Mammary epithelial cell (primary cell): ENCODE measurements at regions of chr13 and their contacts with region 1.

Region 1: DNA sequence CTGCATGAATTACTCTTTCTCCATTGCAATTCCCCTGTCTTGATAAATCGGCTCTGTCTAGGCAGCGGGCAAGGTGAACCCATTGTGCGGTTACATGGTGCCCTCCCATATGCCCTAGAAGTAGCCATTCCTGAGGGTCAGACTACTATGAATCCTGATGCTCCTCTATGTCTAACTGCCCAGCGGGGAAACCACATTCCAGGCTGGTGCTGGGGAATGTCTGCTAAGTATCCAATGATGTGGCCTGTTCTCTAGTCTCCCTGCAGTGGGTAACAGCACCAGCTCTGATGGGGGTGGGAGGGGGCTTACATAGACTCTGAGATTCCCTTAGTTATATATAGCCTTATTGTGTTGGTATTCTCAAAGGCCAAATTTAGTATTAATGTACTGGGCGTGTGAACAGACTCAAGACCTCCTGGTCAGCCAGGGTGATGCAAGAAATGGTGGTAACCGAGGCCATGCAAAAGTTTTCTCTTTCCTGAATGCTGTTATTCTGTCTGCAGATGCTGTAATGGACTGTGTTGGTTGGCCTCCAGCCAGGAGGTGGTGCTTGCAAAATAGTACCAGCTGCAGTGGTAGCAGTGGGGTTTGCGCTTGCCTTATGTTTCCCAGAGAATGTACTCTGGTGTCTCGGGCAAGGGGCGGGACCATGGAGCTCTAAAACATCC is 564.8 kb upstream of the SLITRK1 start:
- DNase-seq: no peak
- H3K4me3 ChIP-seq: no peak overlapping the region
- H3K27ac ChIP-seq: no peak overlapping the region
- H3K4me1 ChIP-seq: peaks cover 30% of the 10 kb centered on the region
- H3K27me3 ChIP-seq: no peaks in the 10 kb centered on the region
- CTCF ChIP-seq: no peak

Region 2: DNA sequence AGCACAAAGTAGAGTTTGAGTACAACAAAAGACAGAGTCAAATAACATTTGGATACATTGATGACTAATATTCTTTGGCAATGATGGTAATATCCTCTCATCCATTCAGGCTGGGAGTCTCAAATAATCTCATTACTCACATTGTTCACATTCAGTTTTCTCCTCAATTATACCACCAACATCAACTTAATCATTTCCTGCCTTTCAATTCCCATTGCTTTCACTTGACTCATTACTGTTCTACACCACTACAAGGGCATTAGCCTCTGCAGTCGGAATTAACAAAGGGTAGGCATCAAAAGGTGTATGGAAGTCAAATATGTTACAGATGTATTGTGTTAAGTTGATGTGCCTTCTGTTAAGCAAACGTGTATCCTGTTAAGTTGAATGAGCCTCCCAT is 46.4 kb before region 1 on chr13:
- CTCF ChIA-PET with region 1: no interaction called
- dilution Hi-C with region 1: no loop called
- in situ Hi-C with region 1: no loop called
- intact Hi-C with region 1: loop called (anchors 2 kb)
- DNase-seq: peak; percentile 94
- H3K4me3 ChIP-seq: no peak overlapping the region
- H3K27ac ChIP-seq: peak overlapping the region; percentile 36
- H3K4me1 ChIP-seq: peaks cover 16% of the 10 kb centered on the region
- H3K27me3 ChIP-seq: no peaks in the 10 kb centered on the region
- CTCF ChIP-seq: no peak

Region 3: GRCh38 chr13:84481958-84482357 is 34.9 kb after region 1 on chr13:
- CTCF ChIA-PET with region 1: no interaction called
- dilution Hi-C with region 1: no loop called
- in situ Hi-C with region 1: no loop called
- intact Hi-C with region 1: loop called (anchors 5 kb)
- DNase-seq: peak; percentile 80
- H3K4me3 ChIP-seq: no peak overlapping the region
- H3K27ac ChIP-seq: peak overlapping the region; percentile 8
- H3K4me1 ChIP-seq: peaks cover 18% of the 10 kb centered on the region
- H3K27me3 ChIP-seq: no peaks in the 10 kb centered on the region
- CTCF ChIP-seq: no peak